HepG2 (cell line): ENCODE measurements at regions of chr16 and their contacts with region 1.

Region 1: DNA sequence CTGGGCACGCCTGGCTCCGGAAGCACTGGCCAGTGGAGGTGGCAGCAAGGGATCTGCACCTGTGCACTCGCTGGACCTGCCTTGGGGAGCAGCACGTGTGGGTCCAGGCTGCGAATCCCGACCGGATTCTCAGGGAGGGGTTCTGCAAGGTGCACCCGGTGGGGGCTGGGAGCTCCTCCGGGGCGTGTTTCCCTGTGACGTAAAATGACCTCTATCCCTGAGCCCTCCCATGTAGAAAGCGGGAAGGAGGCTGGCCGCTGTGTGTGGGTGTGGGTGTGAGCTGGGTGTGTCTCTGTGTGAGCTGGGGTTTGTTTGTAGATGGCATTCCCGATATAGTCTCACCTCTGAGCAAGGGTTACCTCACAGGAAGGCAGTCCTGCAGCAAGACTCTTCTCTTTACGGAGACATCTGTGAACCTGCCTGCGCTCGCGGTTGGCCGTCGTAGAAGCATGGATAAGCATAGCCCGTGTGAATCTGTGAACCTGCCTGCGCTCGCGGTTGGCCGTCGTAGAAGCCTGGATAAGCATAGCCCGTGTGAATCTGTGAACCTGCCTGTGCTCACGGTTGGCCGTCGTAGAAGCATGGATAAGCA is 5.5 kb downstream of the SPIRE2 start:
- DNase-seq: no peak
- ATAC-seq: no peak
- H3K4me3 ChIP-seq: no peak overlapping the region
- H3K27ac ChIP-seq: no peak overlapping the region
- H3K4me1 ChIP-seq: peaks cover 68% of the 10 kb centered on the region
- H3K27me3 ChIP-seq: no peaks in the 10 kb centered on the region; a peak in 1 of 5 replicates
- CTCF ChIP-seq: no peak
- EP300 ChIP-seq: no peak
- POLR2A ChIP-seq: 0 out of 4 replicates have a peak, but pooled peaks of 1 of the 2 experiments have one; percentile 7
- RAD21 ChIP-seq: no peak

Region 2: DNA sequence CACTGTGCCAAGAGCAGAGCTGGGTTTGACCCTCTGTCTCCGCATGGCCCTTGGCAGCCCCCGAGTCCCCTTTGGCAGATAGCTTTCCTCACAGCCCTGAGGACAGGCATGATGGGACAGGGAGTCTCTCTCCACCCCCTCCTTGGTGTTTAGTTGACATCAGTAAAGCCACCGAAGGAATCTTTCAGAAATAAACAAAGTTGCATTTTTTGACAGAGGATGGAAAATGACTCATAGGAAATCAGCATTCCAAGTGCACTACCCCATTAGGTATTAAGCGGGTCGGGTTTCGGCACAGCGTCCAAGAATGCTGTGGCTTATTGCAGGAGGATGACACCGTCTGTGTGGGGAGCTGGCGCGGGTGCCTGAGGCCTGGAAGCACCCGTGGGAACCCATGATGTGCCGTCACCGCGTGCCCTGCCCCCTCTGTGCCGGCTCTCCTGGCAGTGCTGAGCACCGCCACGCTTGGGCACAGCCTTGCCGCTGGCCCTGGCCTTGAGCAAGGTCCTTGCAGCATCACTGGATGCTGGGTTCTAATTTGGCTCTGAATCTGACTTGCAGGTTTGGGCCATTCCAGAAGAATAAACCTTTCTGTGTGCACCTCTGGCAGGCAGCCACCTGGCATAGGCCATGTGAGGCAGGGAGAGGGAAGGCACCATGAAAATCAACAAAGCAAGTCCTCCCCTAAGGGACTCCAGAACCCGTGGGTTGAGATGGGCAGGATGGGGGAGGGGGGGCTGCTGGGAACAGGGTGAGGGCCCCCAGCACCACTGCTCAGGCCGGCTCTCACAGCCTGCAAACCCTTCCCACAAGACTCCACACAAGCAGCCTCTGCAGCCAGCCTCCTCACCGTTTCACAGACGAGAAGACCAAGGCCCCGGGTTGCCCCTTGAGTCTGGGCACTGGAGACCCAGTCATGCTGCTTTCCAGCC is 1501.5 kb before region 1 on chr16:
- CTCF ChIA-PET with region 1: no interaction called
- POLR2A ChIA-PET with region 1: no interaction called
- in situ Hi-C with region 1: no loop called
- intact Hi-C with region 1: no loop called
- DNase-seq: no peak
- ATAC-seq: no peak
- H3K4me3 ChIP-seq: no peak overlapping the region
- H3K27ac ChIP-seq: no peak overlapping the region
- H3K4me1 ChIP-seq: peaks cover 13% of the 10 kb centered on the region
- H3K27me3 ChIP-seq: peaks cover 17 to 32% of the 10 kb centered on the region in 2 experiments; a peak in 4 of 5 replicates
- CTCF ChIP-seq: no peak
- EP300 ChIP-seq: no peak
- POLR2A ChIP-seq: no peak
- RAD21 ChIP-seq: no peak

Region 3: DNA sequence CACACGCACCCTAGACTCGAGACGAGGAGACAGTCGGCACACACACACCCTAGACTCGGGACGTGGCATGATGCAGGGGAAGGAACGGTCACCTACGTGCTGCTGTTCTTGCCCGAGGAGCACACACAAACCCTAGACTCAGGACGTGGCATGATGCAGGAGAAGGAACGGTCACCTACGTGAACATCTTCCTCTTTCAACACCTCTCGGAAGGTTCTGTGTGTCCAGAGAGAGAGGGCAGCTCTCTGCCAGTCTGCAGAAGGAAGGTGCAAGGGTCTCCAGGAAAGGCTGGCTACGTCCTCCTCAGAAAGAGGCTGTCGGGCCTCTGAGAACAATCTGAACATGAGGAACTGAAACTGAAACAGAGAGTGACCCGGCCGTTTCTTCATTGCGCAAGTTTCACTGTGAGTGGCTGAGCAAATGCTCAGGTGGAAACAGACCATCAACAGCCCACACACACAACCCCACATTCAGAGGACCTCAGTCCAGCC is 69.0 kb before region 1 on chr16:
- CTCF ChIA-PET with region 1: no interaction called
- POLR2A ChIA-PET with region 1: no interaction called
- in situ Hi-C with region 1: no loop called
- intact Hi-C with region 1: no loop called
- DNase-seq: no peak
- ATAC-seq: peak; percentile 30
- H3K4me3 ChIP-seq: no peak overlapping the region
- H3K27ac ChIP-seq: no peak overlapping the region
- H3K4me1 ChIP-seq: no peaks in the 10 kb centered on the region
- H3K27me3 ChIP-seq: no peaks in the 10 kb centered on the region
- CTCF ChIP-seq: no peak
- EP300 ChIP-seq: no peak
- POLR2A ChIP-seq: no peak
- RAD21 ChIP-seq: no peak

Region 4: GRCh38 chr16:89815639-89816348 is 18.0 kb before region 1 on chr16:
- CTCF ChIA-PET with region 1: no interaction called
- POLR2A ChIA-PET with region 1: interaction called, 111 read pairs
- in situ Hi-C with region 1: no loop called
- intact Hi-C with region 1: no loop called
- DNase-seq: no peak
- ATAC-seq: no peak; the same call in 2 of the 3 replicates
- H3K4me3 ChIP-seq: peak overlapping the region; percentile 71 to 91 (median 87)
- H3K27ac ChIP-seq: peak overlapping the region; percentile 96
- H3K4me1 ChIP-seq: peaks cover 57% of the 10 kb centered on the region
- H3K27me3 ChIP-seq: no peaks in the 10 kb centered on the region; a peak in 1 of 5 replicates
- CTCF ChIP-seq: no peak
- EP300 ChIP-seq: no peak
- POLR2A ChIP-seq: no peak
- RAD21 ChIP-seq: no peak

Region 5: GRCh38 chr16:89822188-89823086 is 11.3 kb before region 1 on chr16:
- CTCF ChIA-PET with region 1: no interaction called
- POLR2A ChIA-PET with region 1: interaction called, 111 read pairs
- in situ Hi-C with region 1: no loop called
- intact Hi-C with region 1: loop called (anchors 2 kb)
- DNase-seq: peak; percentile 99
- ATAC-seq: peak; percentile 95
- H3K4me3 ChIP-seq: peak overlapping the region; percentile 43 to 73 (median 67); a peak in 5 of 6 replicates
- H3K27ac ChIP-seq: peak overlapping the region; percentile 98
- H3K4me1 ChIP-seq: peaks cover 92% of the 10 kb centered on the region
- H3K27me3 ChIP-seq: no peaks in the 10 kb centered on the region
- CTCF ChIP-seq: peak; percentile 2; the same call in 1 of the 2 replicates
- EP300 ChIP-seq: peak; percentile 79 to 90
- POLR2A ChIP-seq: peak; percentile 82 to 88
- RAD21 ChIP-seq: no peak; the same call in 1 of the 2 replicates